ENCODE measurements at regions of chr11 and their contacts with region 1.

Region 1: DNA sequence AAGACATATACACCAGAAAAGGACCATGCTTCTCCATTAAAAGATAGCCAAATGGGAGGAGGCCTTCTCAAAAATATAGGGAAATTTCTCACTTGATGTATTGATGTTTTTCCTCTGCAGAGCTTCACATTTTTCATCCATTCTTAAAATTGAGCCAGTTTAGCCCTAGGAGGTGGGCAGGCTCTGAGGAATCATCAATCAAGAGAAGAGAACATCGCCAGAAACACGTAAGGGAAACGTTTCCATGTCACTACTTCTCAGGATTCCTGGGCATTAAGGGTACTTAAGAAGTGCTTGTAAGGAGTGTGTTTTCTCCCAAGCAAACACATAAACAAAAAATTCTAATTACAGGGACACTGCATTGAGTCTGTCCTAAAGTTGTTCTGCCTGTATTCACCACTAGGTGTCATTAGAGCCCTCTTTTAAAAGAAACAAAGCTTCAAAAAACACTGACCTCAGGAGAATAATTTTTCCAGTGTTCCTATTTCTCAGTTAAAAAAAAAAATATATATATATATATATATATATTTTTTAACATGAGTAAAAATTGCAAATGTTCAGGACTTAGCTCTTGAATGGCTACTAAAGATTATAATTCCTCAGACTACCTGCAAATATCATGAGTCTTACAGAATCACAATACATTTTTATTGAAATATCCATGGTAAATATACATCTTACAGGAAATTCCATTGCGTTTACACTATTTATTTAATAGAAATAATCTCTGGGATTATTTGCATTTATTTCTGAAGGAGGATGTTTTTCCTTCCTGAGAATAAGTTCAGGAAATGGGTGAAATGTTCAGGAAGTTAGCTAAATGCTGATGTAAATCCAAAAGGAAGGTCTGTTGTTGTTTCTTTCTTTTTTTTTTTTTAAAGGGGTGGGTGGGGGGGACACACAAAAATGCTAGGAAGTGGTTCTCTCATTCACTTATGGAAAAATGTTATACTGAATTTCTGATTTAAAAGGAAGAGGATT is 16.0 kb downstream of the FZD4 start:
- DNase-seq: peak; percentile 49
- ATAC-seq: no peak
- H3K4me3 ChIP-seq: no peak overlapping the region
- H3K4me3 Mint-ChIP-seq: no peak overlapping the region
- H3K27ac ChIP-seq: no peak overlapping the region
- H3K27ac Mint-ChIP-seq: no peak overlapping the region
- H3K4me1 ChIP-seq: no peaks in the 10 kb centered on the region
- H3K4me1 Mint-ChIP-seq: no peaks in the 10 kb centered on the region
- H3K27me3 ChIP-seq: no peaks in the 10 kb centered on the region
- H3K27me3 Mint-ChIP-seq: peaks cover 10% of the 10 kb centered on the region
- CTCF ChIP-seq: peak; percentile 76

Region 2: DNA sequence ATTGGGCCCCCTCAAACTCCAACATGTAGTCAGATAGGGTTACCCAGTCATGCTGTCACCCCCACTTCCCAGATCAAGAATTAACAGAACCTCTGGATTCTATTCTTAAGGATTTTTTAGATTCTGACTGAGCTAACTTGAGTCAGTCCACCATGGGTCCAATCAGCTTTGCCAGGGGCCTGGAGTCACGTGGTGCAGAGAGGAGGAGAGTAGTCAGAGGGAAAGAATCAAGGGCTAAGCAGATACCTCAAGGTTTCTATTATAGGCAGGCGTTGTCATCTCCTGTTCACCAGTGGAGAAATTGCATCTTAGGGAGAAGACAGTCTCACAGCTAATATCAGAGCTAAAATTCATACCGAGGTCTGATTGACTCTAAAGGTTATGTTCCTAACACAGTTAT is 12.2 kb before region 1 on chr11:
- CTCF ChIA-PET with region 1: interaction called, 14 read pairs
- POLR2A ChIA-PET with region 1: no interaction called
- intact Hi-C with region 1: no loop called
- DNase-seq: no peak
- ATAC-seq: no peak
- H3K4me3 ChIP-seq: no peak overlapping the region
- H3K4me3 Mint-ChIP-seq: no peak overlapping the region
- H3K27ac ChIP-seq: no peak overlapping the region
- H3K27ac Mint-ChIP-seq: no peak overlapping the region
- H3K4me1 ChIP-seq: no peaks in the 10 kb centered on the region
- H3K4me1 Mint-ChIP-seq: no peaks in the 10 kb centered on the region
- H3K27me3 ChIP-seq: no peaks in the 10 kb centered on the region
- H3K27me3 Mint-ChIP-seq: peaks cover 13% of the 10 kb centered on the region
- CTCF ChIP-seq: no peak

Region 3: DNA sequence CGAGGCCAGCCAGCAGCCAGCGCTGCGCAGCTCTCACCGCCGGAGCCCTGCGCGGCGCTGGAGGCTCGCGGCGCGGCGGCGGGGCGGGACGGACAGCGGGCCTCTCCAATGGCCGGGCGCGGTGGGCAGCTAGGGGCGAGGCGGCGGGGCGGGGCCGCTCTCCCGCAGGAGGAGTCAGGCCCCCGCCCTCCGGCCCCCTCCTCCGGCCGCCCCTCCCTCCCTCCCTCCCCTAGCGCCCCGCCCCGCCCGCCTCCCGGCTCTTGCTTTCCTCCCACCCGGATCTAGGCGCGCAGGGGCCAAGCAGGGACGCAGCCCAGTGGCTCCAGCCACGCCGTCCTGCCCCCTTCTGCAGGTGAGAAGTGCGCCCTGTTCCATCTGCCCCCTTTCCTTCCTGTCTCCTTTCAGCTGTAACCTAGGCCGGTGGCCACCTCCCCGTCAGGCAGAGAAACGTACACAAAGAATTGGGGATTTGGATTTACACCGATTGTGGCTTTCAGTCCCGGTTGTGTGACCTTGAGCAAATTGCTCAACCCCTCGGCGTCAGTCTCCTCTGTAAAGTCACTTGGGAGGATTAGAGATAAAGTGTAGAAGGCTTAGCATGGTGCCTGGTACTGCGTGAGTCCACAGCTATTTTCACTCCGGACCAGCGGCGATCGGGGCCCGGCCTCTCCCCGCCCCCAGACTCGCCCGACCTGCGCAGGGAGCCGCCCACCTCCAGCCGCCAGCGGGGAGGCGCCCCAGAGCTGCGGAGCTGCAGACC is 16.4 kb after region 1 on chr11 and contains the start of gene FZD4:
- CTCF ChIA-PET with region 1: interaction called, 19 read pairs
- POLR2A ChIA-PET with region 1: no interaction called
- intact Hi-C with region 1: no loop called
- DNase-seq: peak; percentile 52
- ATAC-seq: peak; percentile 94
- H3K4me3 ChIP-seq: peak within 1 kb of the TSS; percentile 32 to 71 (median 59)
- H3K4me3 Mint-ChIP-seq: peak within 1 kb of the TSS; percentile 95
- H3K27ac ChIP-seq: no peak within 1 kb of the TSS
- H3K27ac Mint-ChIP-seq: peak within 1 kb of the TSS; percentile 5
- H3K4me1 ChIP-seq: peaks cover 11 to 17% of the 10 kb centered on the region in 2 donors
- H3K4me1 Mint-ChIP-seq: peaks cover 18% of the 10 kb centered on the region
- H3K27me3 ChIP-seq: peaks cover 0 to 16% (median 7%) of the 10 kb centered on the region in 4 experiments
- H3K27me3 Mint-ChIP-seq: peaks cover 23% of the 10 kb centered on the region
- CTCF ChIP-seq: no peak
- total RNA-seq, gene FZD4: 0.02 and 0.15 TPM in 2 replicates

Region 4: GRCh38 chr11:87284306-87284705 is 345.1 kb after region 1 on chr11:
- CTCF ChIA-PET with region 1: interaction called, 123 read pairs
- POLR2A ChIA-PET with region 1: no interaction called
- intact Hi-C with region 1: no loop called
- DNase-seq: no peak
- ATAC-seq: no peak
- H3K4me3 ChIP-seq: no peak overlapping the region
- H3K4me3 Mint-ChIP-seq: no peak overlapping the region
- H3K27ac ChIP-seq: no peak overlapping the region
- H3K27ac Mint-ChIP-seq: no peak overlapping the region
- H3K4me1 ChIP-seq: no peaks in the 10 kb centered on the region
- H3K4me1 Mint-ChIP-seq: no peaks in the 10 kb centered on the region
- H3K27me3 ChIP-seq: no peaks in the 10 kb centered on the region
- H3K27me3 Mint-ChIP-seq: no peaks in the 10 kb centered on the region
- CTCF ChIP-seq: no peak

Measured in B cell (primary cell).